ENCODE measurements at regions of chr10 and their contacts with region 1.

Region 1: DNA sequence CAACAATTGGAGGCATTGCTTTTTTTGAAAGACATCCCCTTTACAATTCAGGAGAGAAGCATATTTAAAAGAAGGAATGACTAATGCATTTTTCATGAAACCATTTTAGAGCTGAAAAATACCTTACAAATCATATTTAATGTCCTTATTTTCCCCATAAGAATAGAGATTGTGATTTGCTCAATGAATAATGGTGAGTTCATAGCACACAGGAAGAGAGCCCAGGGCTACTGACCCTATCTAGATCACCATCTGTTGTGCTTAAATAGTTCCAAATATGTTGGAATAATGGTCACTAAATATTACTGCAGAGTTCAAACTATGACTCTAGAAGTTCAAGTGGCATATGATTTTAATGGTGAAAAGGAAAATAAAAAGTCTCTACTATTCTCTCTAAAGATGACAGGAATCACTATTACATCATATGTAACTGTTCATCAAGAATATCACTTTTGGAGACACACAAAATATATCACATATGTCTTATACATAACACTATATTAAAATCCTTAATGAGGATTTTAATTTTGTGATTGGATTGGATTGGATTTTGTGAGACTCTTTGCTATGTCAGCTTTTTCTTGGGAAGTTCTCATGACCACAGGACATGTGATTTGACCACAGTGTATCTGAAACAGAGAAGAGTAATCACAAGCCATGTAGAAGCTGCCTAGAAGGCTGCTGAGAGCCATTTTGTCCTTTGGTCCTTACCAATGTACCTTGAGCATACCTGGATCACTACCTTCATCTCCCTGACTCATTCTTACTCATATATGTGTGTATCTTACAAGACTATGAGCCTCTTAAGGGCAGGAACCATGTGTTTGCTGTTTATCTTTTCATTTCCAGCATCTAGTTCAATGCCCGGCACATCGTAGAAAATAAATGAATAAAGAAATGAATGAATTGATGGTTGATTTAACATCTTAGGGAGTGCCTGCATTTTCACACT is 26.4 kb downstream of the SLC16A9 start:
- DNase-seq: no peak
- CTCF ChIP-seq: no peak

Region 2: GRCh38 chr10:58818900-58819299 is 864.4 kb before region 1 on chr10:
- CTCF ChIA-PET with region 1: no interaction called
- POLR2A ChIA-PET with region 1: no interaction called
- DNase-seq: no peak
- CTCF ChIP-seq: no peak

Region 3: GRCh38 chr10:59133841-59134593 is 549.2 kb before region 1 on chr10:
- CTCF ChIA-PET with region 1: no interaction called
- POLR2A ChIA-PET with region 1: no interaction called
- DNase-seq: no peak
- CTCF ChIP-seq: no peak

Region 4: DNA sequence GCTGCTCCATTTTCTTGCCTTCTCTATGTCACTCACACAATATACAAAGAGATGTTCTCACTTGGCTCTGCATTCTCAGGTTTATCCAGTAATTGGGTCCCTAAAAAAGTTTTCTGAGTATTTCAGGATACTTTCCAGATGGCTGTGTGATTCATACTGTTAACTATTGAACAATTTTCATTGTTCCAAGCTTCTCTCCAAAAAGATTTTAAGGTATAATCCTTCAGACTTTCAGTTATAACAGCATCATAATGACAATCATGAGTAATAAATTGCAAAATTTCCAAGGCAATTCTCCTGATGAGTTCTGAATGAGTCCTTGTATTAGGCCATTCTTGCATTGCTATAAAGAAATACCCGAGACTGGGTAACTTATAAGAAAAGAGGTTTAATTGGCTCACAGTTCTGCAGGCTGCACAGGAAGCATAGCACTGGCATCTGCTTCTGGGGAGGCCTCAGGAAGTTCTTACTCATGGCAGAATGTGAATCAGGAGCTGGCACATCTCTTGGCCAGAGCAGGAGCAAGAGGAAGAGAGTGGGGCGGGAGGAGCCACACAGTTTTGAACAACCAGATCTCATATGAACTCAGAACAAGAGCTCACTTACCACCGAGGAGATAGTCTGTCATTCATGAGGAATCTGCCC is 121.7 kb before region 1 on chr10:
- CTCF ChIA-PET with region 1: no interaction called
- POLR2A ChIA-PET with region 1: no interaction called
- DNase-seq: no peak
- CTCF ChIP-seq: no peak

Region 5: DNA sequence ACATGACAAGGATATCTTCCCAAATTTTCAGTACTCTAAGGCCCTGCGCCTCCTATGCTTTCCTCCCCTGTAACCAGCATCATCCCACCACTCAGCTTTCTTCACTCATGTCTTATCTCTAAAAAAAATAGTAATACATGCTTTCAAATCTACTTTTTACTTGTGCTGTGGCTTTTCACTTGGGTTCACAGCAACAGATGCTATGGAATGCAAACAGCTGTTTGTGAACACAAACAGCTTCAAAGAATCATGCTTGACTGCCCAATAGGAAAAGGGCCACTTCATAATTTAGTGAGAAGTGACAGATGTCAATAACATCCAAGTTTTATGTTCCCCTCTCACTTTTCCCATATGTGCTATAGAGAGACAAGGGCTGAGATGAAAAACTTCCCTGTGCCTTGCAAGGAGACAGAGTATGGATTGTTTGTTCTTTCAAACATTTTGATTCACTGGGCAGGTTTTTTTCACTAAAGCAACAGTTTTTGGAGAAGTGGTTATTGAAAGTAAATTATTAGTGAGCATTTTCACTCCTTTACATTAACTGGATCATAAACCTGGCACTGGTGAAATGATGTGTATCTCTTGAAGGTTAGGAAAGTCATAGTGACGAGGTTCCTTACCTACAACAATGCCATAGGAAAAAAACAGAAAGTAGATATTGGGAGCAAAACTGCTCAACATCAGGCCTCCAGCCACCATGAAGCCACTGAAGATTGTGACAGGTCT is 10.9 kb before region 1 on chr10:
- CTCF ChIA-PET with region 1: interaction called, 19 read pairs
- POLR2A ChIA-PET with region 1: no interaction called
- DNase-seq: no peak
- CTCF ChIP-seq: no peak

Measured in GM10248 (cell line).